ENCODE measurements at regions of chr5 and their contacts with region 1.

Region 1: DNA sequence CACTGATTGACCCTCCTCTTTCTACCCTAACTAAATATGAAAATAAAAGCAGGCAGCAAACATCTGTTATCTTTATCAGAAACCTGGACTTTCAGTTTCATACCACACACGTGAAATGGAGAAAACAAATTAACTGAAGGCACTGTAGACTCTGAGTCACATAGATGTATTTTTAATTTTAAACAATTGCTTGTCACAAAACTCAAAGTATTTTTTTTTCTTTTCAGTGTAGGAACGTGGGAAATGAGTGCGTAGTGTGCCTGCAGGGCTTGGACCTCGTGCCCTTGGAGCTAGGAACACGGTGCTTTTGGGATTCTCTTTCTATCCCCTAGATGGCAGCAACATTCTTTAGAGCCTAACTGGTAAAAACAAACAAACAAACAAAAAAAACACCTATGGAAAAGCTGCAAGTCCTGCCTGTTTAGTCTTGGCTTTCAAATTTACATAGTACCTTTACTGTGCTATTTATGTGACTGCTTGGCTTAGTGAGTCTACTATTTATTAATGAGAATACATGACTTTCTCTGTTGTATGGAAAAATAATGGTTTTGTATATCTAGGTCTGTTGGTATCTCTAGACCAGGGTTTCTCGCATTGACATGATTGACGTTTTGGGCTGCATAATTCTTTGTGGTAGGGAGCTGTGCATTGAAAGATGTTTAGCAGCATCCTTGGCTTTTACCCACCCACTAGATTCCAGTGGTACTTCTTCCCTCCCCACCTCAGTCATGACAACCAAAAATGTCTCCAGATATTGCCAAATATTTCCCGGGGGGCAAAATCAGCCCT is 16.8 kb upstream of the ACTBL2 start:
- DNase-seq: peak; percentile 69
- ATAC-seq: 0 out of 2 replicates have a peak, but pooled peaks have one; percentile 9
- H3K4me3 ChIP-seq: no peak overlapping the region
- H3K27ac ChIP-seq: no peak overlapping the region; the same call in 1 of the 2 replicates
- H3K4me1 ChIP-seq: peaks cover 13% of the 10 kb centered on the region
- H3K27me3 ChIP-seq: no peaks in the 10 kb centered on the region
- CTCF ChIP-seq: peak; percentile 77
- POLR2A ChIP-seq: no peak
- RAD21 ChIP-seq: peak; percentile 84

Region 2: GRCh38 chr5:57157131-57157530 is 342.3 kb before region 1 on chr5:
- CTCF ChIA-PET with region 1: no interaction called
- POLR2A ChIA-PET with region 1: no interaction called
- dilution Hi-C with region 1: no loop called
- in situ Hi-C with region 1: no loop called
- intact Hi-C with region 1: no loop called
- DNase-seq: no peak
- ATAC-seq: no peak
- H3K4me3 ChIP-seq: no peak overlapping the region
- H3K27ac ChIP-seq: no peak overlapping the region
- H3K4me1 ChIP-seq: no peaks in the 10 kb centered on the region
- H3K27me3 ChIP-seq: no peaks in the 10 kb centered on the region
- CTCF ChIP-seq: no peak
- POLR2A ChIP-seq: no peak
- RAD21 ChIP-seq: no peak

Region 3: GRCh38 chr5:57383093-57383861 is 116.2 kb before region 1 on chr5:
- CTCF ChIA-PET with region 1: interaction called, 11 read pairs
- POLR2A ChIA-PET with region 1: no interaction called
- dilution Hi-C with region 1: no loop called
- in situ Hi-C with region 1: no loop called
- intact Hi-C with region 1: loop called (anchors 2 kb)
- DNase-seq: peak; percentile 99
- ATAC-seq: peak; percentile 93
- H3K4me3 ChIP-seq: no peak overlapping the region
- H3K27ac ChIP-seq: peak overlapping the region; percentile 94
- H3K4me1 ChIP-seq: peaks cover 8% of the 10 kb centered on the region
- H3K27me3 ChIP-seq: no peaks in the 10 kb centered on the region
- CTCF ChIP-seq: peak; percentile 59
- POLR2A ChIP-seq: no peak
- RAD21 ChIP-seq: peak; percentile 66

Region 4: GRCh38 chr5:57887851-57888621 is 388.6 kb after region 1 on chr5:
- CTCF ChIA-PET with region 1: interaction called, 3 read pairs
- POLR2A ChIA-PET with region 1: no interaction called
- dilution Hi-C with region 1: no loop called
- in situ Hi-C with region 1: loop called (anchors 10 kb)
- intact Hi-C with region 1: loop called (anchors 2 kb)
- DNase-seq: peak; percentile 69
- ATAC-seq: peak; percentile 83
- H3K4me3 ChIP-seq: no peak overlapping the region
- H3K27ac ChIP-seq: no peak overlapping the region
- H3K4me1 ChIP-seq: peaks cover 7% of the 10 kb centered on the region
- H3K27me3 ChIP-seq: no peaks in the 10 kb centered on the region
- CTCF ChIP-seq: peak; percentile 63
- POLR2A ChIP-seq: no peak
- RAD21 ChIP-seq: peak; percentile 80

Region 5: DNA sequence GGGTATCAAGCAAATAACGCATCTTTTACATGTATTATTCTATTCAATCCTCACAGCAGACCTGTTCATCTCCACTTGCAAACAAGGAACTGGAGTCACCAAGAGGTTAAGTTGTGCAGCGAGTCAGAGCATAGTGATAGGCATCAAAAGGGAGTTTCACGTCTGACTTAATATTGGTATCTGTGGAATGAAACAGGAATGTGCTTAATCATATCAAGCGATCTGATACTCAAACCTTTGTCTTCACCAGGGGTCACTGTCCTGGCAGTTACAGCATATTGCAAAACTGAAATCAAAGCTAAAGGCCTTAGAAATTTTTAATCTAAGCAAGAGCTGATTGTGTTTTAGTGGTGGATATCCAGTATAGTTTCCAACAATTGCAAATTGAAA is 688.8 kb after region 1 on chr5:
- CTCF ChIA-PET with region 1: no interaction called
- POLR2A ChIA-PET with region 1: no interaction called
- dilution Hi-C with region 1: no loop called
- in situ Hi-C with region 1: no loop called
- intact Hi-C with region 1: loop called (anchors 5 kb)
- DNase-seq: peak; percentile 70
- ATAC-seq: peak; percentile 83
- H3K4me3 ChIP-seq: no peak overlapping the region
- H3K27ac ChIP-seq: no peak overlapping the region
- H3K4me1 ChIP-seq: peaks cover 3% of the 10 kb centered on the region
- H3K27me3 ChIP-seq: no peaks in the 10 kb centered on the region
- CTCF ChIP-seq: no peak
- POLR2A ChIP-seq: no peak
- RAD21 ChIP-seq: no peak

Region 6: GRCh38 chr5:58452566-58453258 is 953.3 kb after region 1 on chr5:
- CTCF ChIA-PET with region 1: no interaction called
- POLR2A ChIA-PET with region 1: no interaction called
- dilution Hi-C with region 1: no loop called
- in situ Hi-C with region 1: no loop called
- intact Hi-C with region 1: loop called (anchors 1 kb)
- DNase-seq: peak; percentile 42
- ATAC-seq: peak; percentile 21
- H3K4me3 ChIP-seq: no peak overlapping the region
- H3K27ac ChIP-seq: peak overlapping the region; percentile 53; the same call in 1 of the 2 replicates
- H3K4me1 ChIP-seq: peaks cover 2% of the 10 kb centered on the region; the same call in 1 of the 2 replicates
- H3K27me3 ChIP-seq: no peaks in the 10 kb centered on the region
- CTCF ChIP-seq: no peak
- POLR2A ChIP-seq: peak; percentile 54
- RAD21 ChIP-seq: no peak

Measured in IMR-90 (cell line).